Sigmoid colon (tissue), 7 donors: ENCODE measurements at regions of chr9 and their contacts with region 1.

Region 1: DNA sequence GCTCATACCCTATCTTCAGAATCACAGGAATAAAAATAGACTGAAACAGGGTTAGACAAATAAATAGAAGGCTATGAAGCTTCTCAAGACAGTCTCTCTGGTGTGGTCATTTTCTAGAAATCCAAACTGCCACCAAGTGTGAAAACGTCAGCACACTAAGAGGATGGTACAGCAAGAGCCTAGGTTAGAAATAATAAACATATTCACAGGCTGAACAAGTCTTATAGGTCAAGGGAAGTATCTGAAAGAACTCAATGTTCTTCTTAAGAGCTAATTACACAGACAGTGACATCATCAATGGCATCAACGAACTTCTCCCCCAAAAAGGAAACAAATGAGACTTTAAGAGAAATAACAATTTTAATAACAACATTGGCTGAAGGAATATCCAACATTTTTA is 22.7 kb upstream of the PLPP6 start:
- DNase-seq: no peak
- H3K4me3 ChIP-seq: no peak overlapping the region
- H3K27ac ChIP-seq: no peak overlapping the region
- H3K4me1 ChIP-seq: no peaks in the 10 kb centered on the region
- H3K27me3 ChIP-seq: no peaks in the 10 kb centered on the region
- CTCF ChIP-seq: no peak
- EP300 ChIP-seq: no peak
- POLR2A ChIP-seq: no peak

Region 2: DNA sequence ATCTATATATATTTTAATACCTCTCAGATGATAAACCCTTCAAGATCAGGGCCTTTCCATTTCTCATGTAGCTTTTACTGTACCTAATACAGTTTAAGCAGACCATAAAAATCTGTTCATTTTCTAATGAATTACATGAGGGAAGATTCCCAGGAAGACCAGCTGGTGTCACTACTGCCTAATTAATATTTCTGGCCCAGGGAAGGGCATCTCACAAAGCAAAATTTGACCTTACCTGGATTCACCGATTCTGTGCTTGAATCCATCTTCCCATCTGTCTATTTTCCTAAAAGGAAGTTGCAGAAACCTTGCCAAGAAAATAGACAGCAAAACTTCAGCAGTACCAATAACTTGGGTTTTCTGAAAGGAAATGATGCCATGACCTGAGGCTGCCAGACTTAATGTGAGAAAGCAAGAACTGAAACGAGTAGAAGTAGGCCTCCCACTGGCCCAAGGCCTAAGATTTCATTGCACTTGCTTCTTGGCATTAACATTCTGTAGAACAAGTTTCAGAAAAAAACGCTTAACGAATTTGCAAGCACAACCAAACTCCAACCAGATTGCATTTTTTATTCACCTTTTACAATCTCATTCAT is 256.6 kb before region 1 on chr9:
- intact Hi-C with region 1: loop called (anchors 1 kb)
- DNase-seq: no peak
- H3K4me3 ChIP-seq: no peak overlapping the region
- H3K27ac ChIP-seq: no peak overlapping the region
- H3K4me1 ChIP-seq: no peaks in the 10 kb centered on the region
- H3K27me3 ChIP-seq: no peaks in the 10 kb centered on the region
- CTCF ChIP-seq: peak in 3 of 4 experiments; percentile 40 to 57 (median 52)
- EP300 ChIP-seq: no peak
- POLR2A ChIP-seq: no peak

Region 3: DNA sequence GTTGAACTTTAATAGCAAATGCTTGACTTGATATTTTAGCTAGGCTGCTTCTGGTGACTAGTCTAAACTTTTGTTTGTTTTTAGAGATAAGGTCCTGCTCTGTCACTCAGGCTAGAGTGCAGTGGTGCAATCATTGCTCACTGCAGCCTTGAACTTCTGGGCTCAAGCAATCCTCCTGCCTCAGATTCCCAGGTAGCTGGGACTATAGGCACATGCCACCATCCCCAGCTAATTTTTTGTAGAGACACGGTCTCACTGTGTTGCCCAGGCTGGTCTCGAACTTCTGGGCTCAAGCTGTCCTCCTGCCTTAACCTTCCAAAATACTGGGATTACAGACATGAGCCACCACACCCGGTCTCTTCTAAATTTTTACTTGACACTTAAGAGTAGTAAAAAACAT is 60.7 kb after region 1 on chr9:
- intact Hi-C with region 1: no loop called
- DNase-seq: no peak
- H3K4me3 ChIP-seq: no peak overlapping the region
- H3K27ac ChIP-seq: no peak overlapping the region
- H3K4me1 ChIP-seq: no peaks in the 10 kb centered on the region
- H3K27me3 ChIP-seq: no peaks in the 10 kb centered on the region
- CTCF ChIP-seq: no peak
- EP300 ChIP-seq: no peak
- POLR2A ChIP-seq: no peak